ENCODE measurements at regions of chr16 and their contacts with region 1.

Region 1: DNA sequence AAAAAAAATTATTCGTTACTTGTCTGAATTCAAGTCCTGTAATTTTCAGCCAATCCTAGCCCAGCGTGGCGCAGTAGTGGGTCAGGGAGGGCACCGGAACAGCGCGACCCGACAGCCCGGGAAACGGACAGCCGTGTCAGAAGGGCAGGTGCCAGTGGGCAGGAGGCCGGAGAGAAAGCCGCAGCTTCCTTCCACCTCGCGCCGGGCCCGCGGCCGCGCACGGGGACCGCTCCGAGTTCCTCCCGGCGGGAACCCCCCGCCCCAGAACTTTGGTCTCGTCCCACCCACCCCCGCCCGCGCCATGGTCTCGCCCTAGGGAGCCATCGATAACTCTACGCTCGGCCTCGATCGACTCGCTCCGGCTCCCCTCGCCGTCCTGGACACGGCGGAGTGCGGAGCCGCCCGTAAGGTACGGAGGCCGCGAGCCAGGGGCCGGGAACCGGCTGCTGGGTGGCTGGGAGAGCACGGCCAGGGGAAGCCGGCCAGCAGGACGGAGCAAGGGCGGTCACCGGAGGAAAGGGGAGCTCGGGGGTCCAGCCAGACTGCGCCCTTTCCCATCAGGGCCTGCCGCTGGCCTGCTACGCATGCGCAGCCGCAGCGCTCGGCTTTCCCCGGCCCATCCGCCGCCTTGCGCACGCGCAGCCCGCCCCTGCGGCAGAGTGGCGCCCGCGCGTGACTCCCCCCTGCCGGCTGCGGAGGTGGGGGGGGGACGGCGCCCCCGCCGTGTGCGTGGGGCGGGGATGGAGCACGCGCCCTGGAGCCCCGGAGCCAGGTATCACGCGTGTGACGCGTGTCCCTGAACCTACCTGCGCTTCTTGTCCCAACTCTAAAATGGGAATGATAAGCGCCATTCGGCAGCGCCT is at the start of gene MLST8:
- DNase-seq: peak; percentile 81 to 97 (median 92)
- ATAC-seq: peak; percentile 92
- H3K4me3 ChIP-seq: peak within 1 kb of the TSS; percentile 83 to 94
- H3K4me3 Mint-ChIP-seq: peak within 1 kb of the TSS; percentile 87
- H3K27ac ChIP-seq: peak within 1 kb of the TSS; percentile 83 to 97
- H3K27ac Mint-ChIP-seq: peak within 1 kb of the TSS; percentile 91
- H3K4me1 ChIP-seq: peaks cover 15% of the 10 kb centered on the region
- H3K4me1 Mint-ChIP-seq: peaks cover 19% of the 10 kb centered on the region
- H3K27me3 ChIP-seq: no peaks in the 10 kb centered on the region
- H3K27me3 Mint-ChIP-seq: peaks cover 1% of the 10 kb centered on the region
- CTCF ChIP-seq: no peak
- total RNA-seq, gene MLST8: 29.9 to 30.8 TPM

Region 2: GRCh38 chr16:1932050-1933028 is 273.0 kb before region 1 on chr16:
- CTCF ChIA-PET with region 1: no interaction called
- POLR2A ChIA-PET with region 1: no interaction called
- intact Hi-C with region 1: no loop called
- DNase-seq: no peak
- ATAC-seq: no peak
- H3K4me3 ChIP-seq: no peak overlapping the region
- H3K4me3 Mint-ChIP-seq: no peak overlapping the region
- H3K27ac ChIP-seq: no peak overlapping the region
- H3K27ac Mint-ChIP-seq: no peak overlapping the region
- H3K4me1 ChIP-seq: no peaks in the 10 kb centered on the region
- H3K4me1 Mint-ChIP-seq: peaks cover 2% of the 10 kb centered on the region
- H3K27me3 ChIP-seq: peaks cover 0 to 3% of the 10 kb centered on the region in 2 experiments
- H3K27me3 Mint-ChIP-seq: no peaks in the 10 kb centered on the region
- CTCF ChIP-seq: no peak

Region 3: GRCh38 chr16:2223375-2224182 is 18.2 kb after region 1 on chr16 and contains the start of gene E4F1:
- CTCF ChIA-PET with region 1: no interaction called
- POLR2A ChIA-PET with region 1: interaction called, 5 read pairs
- intact Hi-C with region 1: loop called (anchors 1 kb)
- DNase-seq: peak; percentile 97 to 100 (median 99)
- ATAC-seq: peak; percentile 96
- H3K4me3 ChIP-seq: peak within 1 kb of the TSS; percentile 81 to 88
- H3K4me3 Mint-ChIP-seq: peak within 1 kb of the TSS; percentile 94
- H3K27ac ChIP-seq: peak within 1 kb of the TSS; percentile 67 to 76
- H3K27ac Mint-ChIP-seq: peak within 1 kb of the TSS; percentile 85
- H3K4me1 ChIP-seq: peaks cover 13% of the 10 kb centered on the region
- H3K4me1 Mint-ChIP-seq: peaks cover 22% of the 10 kb centered on the region
- H3K27me3 ChIP-seq: no peaks in the 10 kb centered on the region
- H3K27me3 Mint-ChIP-seq: no peaks in the 10 kb centered on the region
- CTCF ChIP-seq: no peak
- total RNA-seq, gene E4F1: 36.3 to 37.5 TPM

Region 4: GRCh38 chr16:2267913-2268666 is 62.8 kb after region 1 on chr16 and contains the start of gene RNPS1:
- CTCF ChIA-PET with region 1: no interaction called
- POLR2A ChIA-PET with region 1: interaction called, 5 read pairs
- intact Hi-C with region 1: loop called (anchors 1 kb)
- DNase-seq: peak; percentile 90 to 99 (median 97)
- ATAC-seq: peak; percentile 81
- H3K4me3 ChIP-seq: peak within 1 kb of the TSS; percentile 94 to 100
- H3K4me3 Mint-ChIP-seq: peak within 1 kb of the TSS; percentile 96
- H3K27ac ChIP-seq: peak within 1 kb of the TSS; percentile 96 to 99
- H3K27ac Mint-ChIP-seq: peak within 1 kb of the TSS; percentile 97
- H3K4me1 ChIP-seq: peaks cover 30% of the 10 kb centered on the region
- H3K4me1 Mint-ChIP-seq: peaks cover 34% of the 10 kb centered on the region
- H3K27me3 ChIP-seq: no peaks in the 10 kb centered on the region
- H3K27me3 Mint-ChIP-seq: no peaks in the 10 kb centered on the region
- CTCF ChIP-seq: no peak
- total RNA-seq, gene RNPS1: 239 to 246 TPM

Region 5: DNA sequence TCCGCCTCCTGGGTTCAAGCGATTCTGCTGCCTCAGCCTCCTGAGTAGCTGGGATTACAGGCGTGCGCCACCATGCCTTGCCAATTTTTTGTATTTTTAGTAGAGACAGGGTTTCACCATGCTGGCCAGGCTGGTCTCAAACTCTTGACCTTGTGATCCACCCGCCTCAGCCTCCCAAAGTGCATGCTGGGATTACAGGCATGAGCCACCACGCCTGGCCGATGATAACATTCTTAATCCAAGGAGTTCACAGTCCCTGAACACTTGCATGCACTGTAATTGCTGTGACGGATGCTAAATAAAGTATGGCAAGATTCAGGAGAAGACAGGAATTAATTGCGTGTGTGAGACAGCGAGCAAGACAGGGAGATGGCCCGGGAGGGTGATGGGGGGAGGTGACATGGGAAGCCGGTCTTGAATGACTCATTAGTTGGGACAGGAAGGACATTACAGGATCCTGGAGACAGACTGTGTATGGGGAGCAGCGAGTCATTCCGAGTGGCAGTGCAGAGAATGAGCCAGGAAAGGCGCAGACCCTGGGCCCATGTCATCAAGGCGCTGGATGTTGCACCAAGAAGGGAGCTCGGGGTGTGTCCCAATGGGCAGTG is 128.5 kb after region 1 on chr16:
- CTCF ChIA-PET with region 1: no interaction called
- POLR2A ChIA-PET with region 1: no interaction called
- intact Hi-C with region 1: no loop called
- DNase-seq: no peak
- ATAC-seq: no peak
- H3K4me3 ChIP-seq: no peak overlapping the region
- H3K4me3 Mint-ChIP-seq: no peak overlapping the region
- H3K27ac ChIP-seq: no peak overlapping the region
- H3K27ac Mint-ChIP-seq: no peak overlapping the region
- H3K4me1 ChIP-seq: no peaks in the 10 kb centered on the region
- H3K4me1 Mint-ChIP-seq: peaks cover 4% of the 10 kb centered on the region
- H3K27me3 ChIP-seq: no peaks in the 10 kb centered on the region
- H3K27me3 Mint-ChIP-seq: peaks cover 4% of the 10 kb centered on the region
- CTCF ChIP-seq: no peak

Region 6: DNA sequence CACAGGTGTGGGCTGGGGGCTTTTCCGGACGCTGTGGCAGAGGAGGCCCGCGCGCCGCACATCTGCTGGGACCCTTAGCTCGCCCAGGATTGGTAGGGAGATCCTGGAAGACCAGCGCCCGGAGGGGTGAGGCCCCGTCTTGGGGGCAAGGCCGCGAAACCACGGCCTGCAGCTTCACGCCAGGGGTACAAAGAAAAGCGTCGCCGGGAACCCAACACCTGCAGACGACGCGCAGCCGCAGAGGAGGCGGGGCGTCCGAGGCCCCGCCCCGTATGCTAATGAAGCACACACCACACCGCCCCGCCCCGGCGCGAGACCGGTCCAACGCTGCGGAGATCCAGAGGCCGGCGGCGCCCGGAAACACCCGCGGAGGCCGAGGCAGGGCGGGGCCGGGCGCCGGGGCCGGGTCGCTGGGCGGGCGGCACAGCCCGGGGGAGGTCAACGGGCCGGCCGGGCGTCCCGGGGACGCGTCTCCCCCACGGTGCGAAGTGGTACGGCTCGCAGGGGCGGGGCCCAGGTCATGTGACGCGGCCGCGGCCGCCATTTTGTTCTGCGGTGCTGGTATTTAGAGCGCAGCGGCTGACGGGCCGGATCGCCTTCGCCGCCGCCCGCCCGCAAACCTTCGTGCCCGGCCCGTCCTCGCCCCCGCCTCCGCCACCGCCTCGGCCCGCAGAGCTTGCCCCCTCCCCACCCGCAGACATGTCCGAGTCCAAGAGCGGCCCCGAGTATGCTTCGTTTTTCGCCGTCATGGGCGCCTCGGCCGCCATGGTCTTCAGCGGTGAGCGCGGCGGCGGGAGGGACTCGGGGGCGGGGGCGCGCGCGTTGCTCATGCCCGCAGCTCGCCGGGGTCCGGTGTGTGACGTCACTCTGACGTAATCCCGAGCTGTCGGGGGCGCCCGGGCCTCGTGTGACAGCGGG is 308.3 kb after region 1 on chr16 and contains the start of gene ATP6V0C:
- CTCF ChIA-PET with region 1: no interaction called
- POLR2A ChIA-PET with region 1: no interaction called
- intact Hi-C with region 1: loop called in 1 of 2 experiments (anchors 1 kb)
- DNase-seq: peak; percentile 84 to 97 (median 92)
- ATAC-seq: peak; percentile 89
- H3K4me3 ChIP-seq: peak within 1 kb of the TSS; percentile 67 to 69
- H3K4me3 Mint-ChIP-seq: peak within 1 kb of the TSS; percentile 94
- H3K27ac ChIP-seq: peak within 1 kb of the TSS; percentile 91 to 94
- H3K27ac Mint-ChIP-seq: peak within 1 kb of the TSS; percentile 97
- H3K4me1 ChIP-seq: peaks cover 47% of the 10 kb centered on the region
- H3K4me1 Mint-ChIP-seq: peaks cover 49% of the 10 kb centered on the region
- H3K27me3 ChIP-seq: no peaks in the 10 kb centered on the region
- H3K27me3 Mint-ChIP-seq: no peaks in the 10 kb centered on the region
- CTCF ChIP-seq: no peak
- total RNA-seq, gene ATP6V0C: 260 TPM